GM18951 (cell line): ENCODE measurements at regions of chrX and their contacts with region 1.

Region 1: GRCh38 chrX:129606918-129607317 is 47.8 kb downstream of the APLN start:
- POLR2A ChIP-seq: no peak

Region 2: DNA sequence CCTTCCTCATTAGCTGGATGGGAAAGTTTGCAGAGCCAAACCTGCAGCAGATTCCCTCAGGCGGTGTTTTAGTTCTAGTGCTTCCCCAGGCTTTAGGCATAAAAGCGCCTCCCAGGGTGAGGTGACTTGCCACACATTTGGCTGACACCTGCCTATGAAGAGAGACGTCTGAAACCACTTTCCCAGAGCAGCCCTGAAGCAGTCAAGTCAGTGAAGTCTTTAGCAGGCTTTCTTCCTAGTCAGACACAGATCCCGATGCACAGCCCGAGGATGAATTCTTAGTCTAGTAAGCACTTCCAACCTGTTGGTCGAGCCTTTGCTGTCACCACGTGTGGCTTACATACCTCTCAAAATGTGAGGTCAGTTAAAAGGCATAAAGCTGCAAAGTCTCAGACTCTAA is 567.7 kb before region 1 on chrX:
- in situ Hi-C with region 1: no loop called
- POLR2A ChIP-seq: no peak

Region 3: GRCh38 chrX:130060122-130061069 is 453.5 kb after region 1 on chrX:
- in situ Hi-C with region 1: loop called (anchors 10 kb)
- POLR2A ChIP-seq: no peak